Activated naive CD4-positive, alpha-beta T cell treated with anti-CD3 and anti-CD28 coated beads for 36 hours (primary cell): ENCODE measurements at regions of chr9 and their contacts with region 1.

Region 1: GRCh38 chr9:23408874-23409273 is 417.2 kb downstream of the ELAVL2 start:
- DNase-seq: no peak
- H3K4me3 Mint-ChIP-seq: no peak overlapping the region
- H3K27ac Mint-ChIP-seq: no peak overlapping the region
- H3K4me1 Mint-ChIP-seq: no peaks in the 10 kb centered on the region
- H3K27me3 Mint-ChIP-seq: no peaks in the 10 kb centered on the region

Region 2: GRCh38 chr9:23394189-23394588 is 14.7 kb before region 1 on chr9:
- CTCF ChIA-PET with region 1: no interaction called
- intact Hi-C with region 1: no loop called
- DNase-seq: no peak
- H3K4me3 Mint-ChIP-seq: no peak overlapping the region
- H3K27ac Mint-ChIP-seq: no peak overlapping the region
- H3K4me1 Mint-ChIP-seq: no peaks in the 10 kb centered on the region
- H3K27me3 Mint-ChIP-seq: no peaks in the 10 kb centered on the region

Region 3: GRCh38 chr9:23464275-23464674 is 55.4 kb after region 1 on chr9:
- CTCF ChIA-PET with region 1: no interaction called
- intact Hi-C with region 1: loop called (anchors 10 kb)
- DNase-seq: no peak
- H3K4me3 Mint-ChIP-seq: no peak overlapping the region
- H3K27ac Mint-ChIP-seq: no peak overlapping the region
- H3K4me1 Mint-ChIP-seq: no peaks in the 10 kb centered on the region
- H3K27me3 Mint-ChIP-seq: no peaks in the 10 kb centered on the region

Region 4: DNA sequence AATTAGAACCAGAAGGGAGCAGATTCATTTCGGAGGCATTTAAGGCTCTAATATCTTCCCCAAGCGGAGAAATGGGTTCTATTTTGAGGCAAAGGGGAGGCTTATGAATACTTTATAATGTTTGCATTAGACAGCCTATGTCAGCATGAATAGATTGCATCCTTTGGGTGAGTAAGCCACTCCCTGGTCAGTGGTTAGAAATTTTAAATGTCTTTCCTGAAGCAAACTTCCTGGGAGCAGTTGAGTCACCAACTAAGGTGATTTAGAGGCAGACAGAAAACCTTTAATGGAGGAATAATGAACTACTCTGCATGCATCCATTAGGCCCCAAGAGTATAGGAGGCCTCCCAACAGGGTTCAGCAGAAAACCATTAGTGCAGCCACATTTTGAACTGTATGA is 212.3 kb after region 1 on chr9:
- CTCF ChIA-PET with region 1: no interaction called
- intact Hi-C with region 1: no loop called
- DNase-seq: no peak
- H3K4me3 Mint-ChIP-seq: no peak overlapping the region
- H3K27ac Mint-ChIP-seq: no peak overlapping the region
- H3K4me1 Mint-ChIP-seq: no peaks in the 10 kb centered on the region
- H3K27me3 Mint-ChIP-seq: peaks cover 2% of the 10 kb centered on the region